ENCODE measurements at regions of chr17 and their contacts with region 1.

Region 1: DNA sequence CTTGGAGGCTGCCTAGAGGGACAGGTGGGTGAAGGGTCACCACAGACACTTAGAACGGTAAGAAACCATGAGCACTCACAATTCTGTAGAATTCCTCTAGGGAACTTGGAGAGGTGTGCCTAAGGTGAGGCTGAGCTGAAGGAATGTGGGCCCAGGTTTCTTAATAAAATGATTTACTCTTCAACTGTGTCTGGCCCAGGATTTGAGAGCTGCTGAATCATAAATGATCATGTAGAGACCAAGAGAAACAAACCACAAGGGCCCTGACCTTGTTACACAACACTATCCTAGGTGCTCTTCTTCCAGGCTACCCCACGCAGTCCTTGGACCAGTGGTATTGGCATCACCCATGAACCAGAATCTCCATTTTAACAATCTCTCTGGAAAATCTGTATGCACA is 27.7 kb downstream of the ZNF18 start:
- DNase-seq: no peak
- H3K4me3 ChIP-seq: no peak overlapping the region
- H3K27ac ChIP-seq: no peak overlapping the region
- H3K4me1 ChIP-seq: no peaks in the 10 kb centered on the region
- H3K27me3 ChIP-seq: no peaks in the 10 kb centered on the region
- CTCF ChIP-seq: no peak

Region 2: DNA sequence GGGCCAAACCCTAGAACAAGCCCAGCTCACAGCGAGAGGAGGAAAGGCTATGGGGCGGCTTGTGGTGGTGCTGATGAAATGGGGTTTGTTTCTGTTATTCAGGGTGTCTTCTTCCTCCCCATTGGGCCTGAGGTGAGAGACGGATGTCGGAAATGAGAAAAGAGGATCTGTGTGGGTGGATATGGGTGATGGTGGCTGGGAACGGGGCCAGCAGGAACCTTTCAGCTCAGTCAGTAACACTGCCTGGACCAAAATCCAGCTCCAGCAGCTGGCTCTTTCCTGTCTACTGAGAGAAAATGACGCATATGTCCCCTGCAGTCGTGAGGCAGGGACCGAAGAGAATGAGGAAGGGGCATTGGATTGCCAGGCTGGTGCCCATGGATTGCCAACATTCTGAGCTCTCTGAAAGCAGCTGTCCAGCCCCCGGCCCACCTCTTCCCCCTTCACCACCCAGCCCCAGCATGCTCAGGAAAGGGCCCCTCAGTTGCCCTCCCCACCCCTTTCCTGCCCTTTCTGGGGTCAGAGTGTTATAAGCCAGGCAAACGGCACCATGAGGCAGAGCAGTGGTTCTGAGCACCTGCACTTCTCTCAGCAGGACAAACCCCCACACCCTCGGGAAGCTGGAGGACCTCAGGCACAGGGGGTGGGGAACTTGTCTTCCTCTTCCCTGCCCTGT is 1316.4 kb before region 1 on chr17:
- CTCF ChIA-PET with region 1: interaction called, 16 read pairs
- POLR2A ChIA-PET with region 1: no interaction called
- intact Hi-C with region 1: no loop called
- DNase-seq: peak; percentile 57
- H3K4me3 ChIP-seq: no peak overlapping the region
- H3K27ac ChIP-seq: no peak overlapping the region
- H3K4me1 ChIP-seq: no peaks in the 10 kb centered on the region
- H3K27me3 ChIP-seq: no peaks in the 10 kb centered on the region
- CTCF ChIP-seq: no peak

Region 3: DNA sequence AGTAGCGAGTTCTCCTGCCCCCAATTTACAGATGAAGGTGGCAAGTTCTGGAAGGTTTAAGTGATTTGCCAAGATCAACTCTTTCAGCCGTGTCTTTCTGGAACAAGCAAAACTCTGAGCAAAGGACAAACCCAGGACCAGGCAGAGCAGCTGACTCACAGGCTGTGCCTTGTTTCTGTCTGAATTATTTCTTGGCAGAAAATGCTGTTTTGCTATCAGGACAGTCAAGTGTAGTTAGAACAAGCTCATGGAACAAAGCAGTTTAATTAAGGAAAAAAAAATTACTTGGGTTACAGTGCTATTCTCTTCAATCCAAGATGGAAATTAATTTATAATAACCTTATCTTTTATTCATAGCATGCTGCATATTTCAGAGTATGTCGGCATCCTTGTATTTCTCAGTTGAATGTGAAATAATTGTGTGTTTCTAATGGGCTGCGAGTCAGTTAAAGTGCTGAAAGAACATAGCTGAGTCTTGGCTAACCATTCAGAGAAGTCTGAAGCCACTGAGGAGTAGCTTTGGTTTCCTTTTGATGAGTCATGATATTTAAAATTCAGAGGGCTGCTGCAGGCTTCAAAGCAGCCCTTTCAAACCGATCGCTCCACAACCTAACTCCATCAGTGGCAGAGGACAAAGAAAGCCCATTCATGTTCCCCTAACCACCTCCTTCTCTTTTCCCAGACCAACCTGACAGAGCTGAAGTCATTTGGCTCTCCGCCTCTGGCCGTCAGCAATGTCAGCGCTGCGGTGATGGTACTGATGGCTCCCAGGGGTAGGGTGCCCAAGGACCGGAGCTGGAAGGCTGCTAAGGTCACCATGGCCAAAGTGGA is 116.0 kb before region 1 on chr17:
- CTCF ChIA-PET with region 1: no interaction called
- POLR2A ChIA-PET with region 1: no interaction called
- intact Hi-C with region 1: no loop called
- DNase-seq: peak; percentile 38
- H3K4me3 ChIP-seq: no peak overlapping the region
- H3K27ac ChIP-seq: no peak overlapping the region
- H3K4me1 ChIP-seq: no peaks in the 10 kb centered on the region
- H3K27me3 ChIP-seq: no peaks in the 10 kb centered on the region
- CTCF ChIP-seq: no peak

Region 4: GRCh38 chr17:12053552-12053951 is 84.0 kb after region 1 on chr17:
- CTCF ChIA-PET with region 1: no interaction called
- POLR2A ChIA-PET with region 1: no interaction called
- intact Hi-C with region 1: no loop called
- DNase-seq: no peak
- H3K4me3 ChIP-seq: no peak overlapping the region
- H3K27ac ChIP-seq: no peak overlapping the region
- H3K4me1 ChIP-seq: peaks cover 5% of the 10 kb centered on the region
- H3K27me3 ChIP-seq: no peaks in the 10 kb centered on the region
- CTCF ChIP-seq: no peak

Region 5: GRCh38 chr17:12485361-12485906 is 515.9 kb after region 1 on chr17:
- CTCF ChIA-PET with region 1: no interaction called
- POLR2A ChIA-PET with region 1: no interaction called
- intact Hi-C with region 1: no loop called
- DNase-seq: peak; percentile 25
- H3K4me3 ChIP-seq: no peak overlapping the region
- H3K27ac ChIP-seq: no peak overlapping the region
- H3K4me1 ChIP-seq: peaks cover 4% of the 10 kb centered on the region
- H3K27me3 ChIP-seq: peaks cover 7% of the 10 kb centered on the region
- CTCF ChIP-seq: no peak

Measured in A673 (cell line).